HepG2 (cell line): ENCODE measurements at regions of chr12 and their contacts with region 1.

Region 1: DNA sequence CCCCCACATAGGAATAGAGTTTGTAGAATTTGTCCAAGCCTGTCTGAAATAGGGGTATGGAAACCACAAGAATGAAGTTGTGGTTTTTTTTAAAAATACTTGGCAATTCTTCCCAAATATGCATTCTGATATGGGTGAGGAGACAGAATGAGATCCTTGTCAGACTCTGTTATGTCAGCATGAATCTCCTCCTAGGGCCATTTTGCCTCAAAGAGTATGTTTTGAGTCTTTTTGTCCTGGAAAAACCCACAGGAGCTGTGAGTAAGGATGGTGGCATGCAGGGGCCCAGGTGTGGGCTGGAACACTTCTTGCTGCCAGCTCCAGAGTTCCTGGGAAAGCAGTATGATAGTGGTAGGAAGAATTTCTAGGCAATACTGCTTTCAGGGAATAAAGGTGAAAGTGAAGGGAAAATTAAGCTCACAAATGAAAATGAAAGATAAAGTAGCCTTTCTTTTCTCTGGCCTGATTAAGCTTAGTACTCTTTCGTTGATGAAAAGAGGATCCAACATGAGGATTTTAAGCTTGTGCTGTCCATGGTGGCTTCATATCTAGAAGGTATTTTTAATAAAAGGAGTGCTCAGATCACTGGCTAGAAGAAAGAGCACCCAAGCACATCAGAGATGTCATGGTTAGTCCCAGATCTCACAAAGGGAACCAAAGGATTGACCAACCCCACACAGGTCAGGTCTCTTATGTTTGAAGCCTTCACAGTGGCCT is 130.8 kb downstream of the LLPH start:
- DNase-seq: no peak
- ATAC-seq: no peak
- H3K4me3 ChIP-seq: no peak overlapping the region
- H3K27ac ChIP-seq: no peak overlapping the region
- H3K4me1 ChIP-seq: peaks cover under 1% of the 10 kb centered on the region
- H3K27me3 ChIP-seq: peaks cover 0 to 1% of the 10 kb centered on the region in 2 experiments; a peak in 1 of 5 replicates
- CTCF ChIP-seq: no peak
- EP300 ChIP-seq: no peak
- POLR2A ChIP-seq: no peak
- RAD21 ChIP-seq: no peak

Region 2: GRCh38 chr12:65765436-65765813 is 234.3 kb before region 1 on chr12:
- CTCF ChIA-PET with region 1: no interaction called
- POLR2A ChIA-PET with region 1: no interaction called
- in situ Hi-C with region 1: no loop called
- intact Hi-C with region 1: no loop called
- DNase-seq: no peak
- ATAC-seq: no peak
- H3K4me3 ChIP-seq: no peak overlapping the region
- H3K27ac ChIP-seq: no peak overlapping the region
- H3K4me1 ChIP-seq: no peaks in the 10 kb centered on the region
- H3K27me3 ChIP-seq: peaks cover 0 to 17% of the 10 kb centered on the region in 2 experiments; a peak in 1 of 5 replicates
- CTCF ChIP-seq: no peak
- EP300 ChIP-seq: no peak
- POLR2A ChIP-seq: no peak
- RAD21 ChIP-seq: no peak

Region 3: DNA sequence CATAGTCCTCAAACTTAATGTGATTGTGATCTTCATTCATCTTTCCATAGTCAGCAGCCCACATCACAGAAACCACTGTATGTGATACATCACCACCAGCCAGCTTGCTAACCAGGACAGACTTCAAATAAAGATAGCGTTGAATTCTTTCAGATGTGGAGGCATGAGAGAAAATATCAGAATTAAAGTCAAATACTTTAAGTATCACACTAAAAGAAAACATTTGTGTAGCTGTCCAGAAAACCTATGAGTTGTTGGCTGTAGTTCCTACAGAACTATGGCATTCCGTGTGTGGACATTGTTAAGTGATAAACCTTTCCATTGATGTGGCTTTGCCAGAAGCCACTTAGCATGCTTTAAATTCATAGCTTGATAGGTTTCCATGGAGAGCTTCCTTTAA is 25.8 kb after region 1 on chr12:
- CTCF ChIA-PET with region 1: no interaction called
- POLR2A ChIA-PET with region 1: no interaction called
- in situ Hi-C with region 1: no loop called
- intact Hi-C with region 1: loop called (anchors 2 kb)
- DNase-seq: peak; percentile 49
- ATAC-seq: no peak
- H3K4me3 ChIP-seq: no peak overlapping the region
- H3K27ac ChIP-seq: no peak overlapping the region
- H3K4me1 ChIP-seq: no peaks in the 10 kb centered on the region
- H3K27me3 ChIP-seq: no peaks in the 10 kb centered on the region
- CTCF ChIP-seq: no peak
- EP300 ChIP-seq: no peak
- POLR2A ChIP-seq: no peak
- RAD21 ChIP-seq: no peak

Region 4: DNA sequence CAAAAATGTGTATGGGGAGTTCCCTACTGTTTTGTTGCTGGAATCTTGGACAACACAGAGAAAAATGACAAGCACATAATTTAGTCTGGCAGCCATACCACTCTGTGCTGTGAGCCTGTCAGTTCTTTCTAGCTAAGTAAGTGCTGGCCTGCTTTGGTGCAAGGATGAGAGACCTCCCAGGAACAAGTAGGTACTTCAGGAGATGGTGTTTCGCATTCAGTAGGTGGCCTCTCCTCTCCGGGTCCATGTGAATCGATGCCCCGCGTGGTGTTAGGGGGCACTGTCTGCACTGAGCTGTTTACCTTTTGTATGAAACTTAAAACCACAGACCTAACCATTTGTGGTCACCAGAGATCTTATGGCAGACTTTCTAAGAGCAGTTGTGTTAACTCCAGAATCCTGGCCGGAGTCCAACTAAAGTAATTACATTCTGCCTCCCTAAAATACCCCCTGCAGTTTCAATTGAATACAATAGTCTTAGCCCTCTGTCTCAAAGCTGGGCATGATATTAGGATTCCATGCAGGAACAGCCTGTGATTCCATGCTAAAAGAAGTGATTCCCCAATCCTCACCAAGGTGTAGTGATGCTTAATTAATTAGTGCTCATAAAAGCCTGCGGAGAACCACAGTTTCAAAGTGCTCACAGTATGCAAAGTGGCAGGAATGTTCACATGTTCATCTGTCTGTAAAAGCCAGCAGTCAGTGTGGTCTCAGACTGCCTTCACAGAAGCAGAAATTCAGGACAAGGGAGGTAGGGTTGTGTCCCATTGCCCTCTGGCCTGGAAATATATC is 66.6 kb after region 1 on chr12:
- CTCF ChIA-PET with region 1: no interaction called
- POLR2A ChIA-PET with region 1: no interaction called
- in situ Hi-C with region 1: no loop called
- intact Hi-C with region 1: loop called (anchors 10 kb)
- DNase-seq: peak; percentile 78
- ATAC-seq: peak; percentile 99
- H3K4me3 ChIP-seq: no peak overlapping the region; a peak in 1 of 6 replicates
- H3K27ac ChIP-seq: no peak overlapping the region
- H3K4me1 ChIP-seq: peaks cover 23% of the 10 kb centered on the region
- H3K27me3 ChIP-seq: no peaks in the 10 kb centered on the region
- CTCF ChIP-seq: peak; percentile 51
- EP300 ChIP-seq: 0 out of 4 replicates have a peak, but pooled peaks of 1 of the 2 experiments have one; percentile 27
- POLR2A ChIP-seq: no peak
- RAD21 ChIP-seq: no peak

Region 5: DNA sequence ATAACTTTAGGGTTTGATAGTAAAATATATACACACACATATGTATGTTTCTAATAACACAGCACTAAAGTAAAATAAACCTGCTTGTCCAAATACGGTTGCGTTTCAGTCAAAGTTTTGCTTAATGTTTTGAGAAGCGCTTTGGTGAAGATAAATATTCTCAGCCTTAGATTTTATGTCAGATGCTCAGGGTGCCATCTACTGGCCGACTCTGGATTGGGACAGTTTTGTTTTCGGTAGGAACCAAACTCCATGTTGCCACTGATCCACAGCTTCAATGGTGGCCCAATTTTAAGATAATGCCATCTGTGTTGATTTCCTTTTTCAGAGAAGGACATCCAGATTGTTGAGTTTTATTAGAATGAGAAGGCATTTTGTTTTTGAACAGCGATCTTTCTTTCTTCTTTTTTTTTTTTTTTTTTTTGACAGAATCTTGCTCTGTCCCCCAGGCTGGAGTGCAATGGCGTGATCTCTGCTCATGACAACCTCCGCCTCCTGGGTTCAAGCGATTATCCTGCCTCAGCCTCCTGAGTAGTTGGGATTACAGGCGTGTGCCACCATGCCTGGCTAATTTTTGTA is 87.7 kb after region 1 on chr12:
- CTCF ChIA-PET with region 1: no interaction called
- POLR2A ChIA-PET with region 1: no interaction called
- in situ Hi-C with region 1: loop called (anchors 25 kb)
- intact Hi-C with region 1: no loop called
- DNase-seq: peak; percentile 57
- ATAC-seq: peak; percentile 72
- H3K4me3 ChIP-seq: no peak overlapping the region
- H3K27ac ChIP-seq: no peak overlapping the region
- H3K4me1 ChIP-seq: peaks cover 27% of the 10 kb centered on the region
- H3K27me3 ChIP-seq: no peaks in the 10 kb centered on the region
- CTCF ChIP-seq: peak; percentile 83
- EP300 ChIP-seq: no peak
- POLR2A ChIP-seq: no peak
- RAD21 ChIP-seq: peak; percentile 77

Region 6: GRCh38 chr12:66388517-66388916 is 388.8 kb after region 1 on chr12:
- CTCF ChIA-PET with region 1: no interaction called
- POLR2A ChIA-PET with region 1: no interaction called
- in situ Hi-C with region 1: no loop called
- intact Hi-C with region 1: no loop called
- DNase-seq: no peak
- ATAC-seq: no peak
- H3K4me3 ChIP-seq: no peak overlapping the region
- H3K27ac ChIP-seq: no peak overlapping the region
- H3K4me1 ChIP-seq: no peaks in the 10 kb centered on the region
- H3K27me3 ChIP-seq: no peaks in the 10 kb centered on the region; a peak in 2 of 5 replicates
- CTCF ChIP-seq: no peak
- EP300 ChIP-seq: no peak
- POLR2A ChIP-seq: no peak
- RAD21 ChIP-seq: no peak